ENCODE measurements at regions of chr14 and their contacts with region 1.

Region 1: DNA sequence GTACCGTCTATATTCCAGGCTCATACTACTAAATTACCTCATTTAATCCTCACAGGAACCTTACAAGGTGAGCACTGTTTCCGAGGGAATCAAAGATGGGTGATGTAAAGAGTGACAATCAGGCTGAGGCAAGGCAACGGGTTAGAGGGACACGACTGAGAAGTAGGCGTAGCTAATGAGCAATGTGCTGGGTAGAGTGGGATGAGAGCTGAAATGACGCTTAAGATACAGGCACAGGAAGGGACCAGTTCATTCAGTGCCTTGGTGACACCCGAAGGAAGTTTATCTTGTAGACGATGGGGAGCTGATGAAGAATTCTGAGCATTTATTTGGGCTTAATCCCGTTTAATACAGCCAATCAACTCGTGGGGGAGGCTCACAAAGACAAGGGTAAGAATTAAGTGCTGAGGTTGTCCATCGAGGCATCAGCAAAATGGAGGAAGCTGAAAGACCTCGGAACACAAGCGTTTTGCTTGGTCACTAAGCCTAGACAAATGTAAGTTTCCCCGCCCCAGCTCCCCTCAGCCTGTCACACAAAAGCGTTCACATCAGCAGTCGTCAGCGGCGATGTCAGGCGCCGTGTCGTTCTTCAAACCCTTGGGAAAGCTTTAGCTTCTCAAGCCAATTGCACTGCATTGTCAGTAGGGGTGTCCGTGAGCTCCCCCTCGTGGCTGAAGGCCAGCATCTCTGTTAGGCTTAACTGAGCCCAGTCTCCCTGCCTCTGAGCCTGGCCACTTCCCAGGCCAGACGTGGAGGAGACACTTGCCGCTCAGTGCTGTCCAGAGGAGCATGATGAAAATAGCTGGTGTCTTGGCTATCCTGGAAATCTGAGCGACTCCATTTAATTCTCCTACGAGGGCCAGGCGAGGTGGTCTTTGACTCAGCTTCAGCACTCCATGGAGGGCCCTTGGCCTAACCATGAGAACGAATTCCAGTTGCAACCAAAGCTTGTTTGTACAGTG is 288.5 kb upstream of the G2E3 start:
- DNase-seq: peak; percentile 41 to 78
- ATAC-seq: peak; percentile 99 to 100
- H3K4me3 ChIP-seq: peak overlapping the region; percentile 23; the same call in 1 of the 3 replicates
- H3K27ac ChIP-seq: no peak overlapping the region
- H3K4me1 ChIP-seq: no peaks in the 10 kb centered on the region
- CTCF ChIP-seq: peak; percentile 68
- EP300 ChIP-seq: no peak
- POLR2A ChIP-seq: no peak
- RAD21 ChIP-seq: peak; percentile 46 to 60; a peak in 4 of 5 replicates

Region 2: GRCh38 chr14:30185832-30186231 is 84.6 kb before region 1 on chr14:
- CTCF ChIA-PET with region 1: no interaction called
- POLR2A ChIA-PET with region 1: no interaction called
- DNase-seq: no peak
- ATAC-seq: no peak
- H3K4me3 ChIP-seq: no peak overlapping the region
- H3K27ac ChIP-seq: no peak overlapping the region
- H3K4me1 ChIP-seq: no peaks in the 10 kb centered on the region
- CTCF ChIP-seq: no peak
- EP300 ChIP-seq: no peak
- POLR2A ChIP-seq: no peak
- RAD21 ChIP-seq: no peak

Region 3: DNA sequence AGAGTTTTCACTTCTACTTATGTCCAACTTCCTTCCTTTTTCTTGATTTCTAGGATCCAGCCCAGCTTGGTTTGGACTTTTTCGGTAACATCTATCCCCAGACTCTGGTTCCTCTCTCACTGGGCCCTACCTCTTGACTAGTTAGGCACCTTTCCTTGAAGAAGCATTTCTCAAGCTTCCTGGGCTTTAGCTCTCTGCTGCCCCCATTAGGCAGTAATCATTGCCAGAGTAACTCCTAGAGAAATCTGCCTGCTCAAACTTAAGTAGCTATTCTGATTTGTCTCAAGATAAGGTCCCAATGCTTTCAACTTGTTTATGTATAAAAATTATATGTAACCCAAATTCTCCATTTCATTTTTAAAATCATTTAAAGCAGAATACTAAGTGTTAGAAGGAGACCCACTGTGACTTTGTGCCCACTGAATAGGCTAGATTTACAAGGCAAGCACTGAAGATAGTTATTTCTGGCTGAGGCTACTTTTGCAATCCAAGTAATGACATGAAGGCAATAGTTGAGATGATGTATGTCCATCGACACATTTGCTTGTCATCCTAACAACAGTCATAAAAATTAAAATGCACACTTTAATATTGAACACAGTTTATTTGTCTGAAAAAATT is 13.5 kb after region 1 on chr14:
- CTCF ChIA-PET with region 1: interaction called, 32 read pairs
- POLR2A ChIA-PET with region 1: no interaction called
- DNase-seq: peak; percentile 17 to 50
- ATAC-seq: peak; percentile 59 to 77; a peak in 4 of 6 replicates
- H3K4me3 ChIP-seq: no peak overlapping the region
- H3K27ac ChIP-seq: no peak overlapping the region
- H3K4me1 ChIP-seq: no peaks in the 10 kb centered on the region
- CTCF ChIP-seq: peak; percentile 48
- EP300 ChIP-seq: no peak
- POLR2A ChIP-seq: no peak
- RAD21 ChIP-seq: peak in 1 of 2 experiments; percentile 46; a peak in 2 of 5 replicates

Measured in A549 (cell line).